Activated CD8-positive, alpha-beta T cell treated with anti-CD3 and anti-CD28 coated beads, Interleukin-2, amount 10 ng/mL, durations not matched to agents 7 days and 5 days (primary cell): ENCODE measurements at regions of chr4 and their contacts with region 1.

Region 1: GRCh38 chr4:77862478-77863216 is at the start of gene MRPL1:
- DNase-seq: peak; percentile 93
- ATAC-seq: peak; percentile 87
- H3K4me3 Mint-ChIP-seq: peak within 1 kb of the TSS; percentile 98
- H3K27ac Mint-ChIP-seq: peak within 1 kb of the TSS; percentile 99
- H3K4me1 Mint-ChIP-seq: peaks cover 63% of the 10 kb centered on the region
- H3K27me3 Mint-ChIP-seq: no peaks in the 10 kb centered on the region
- total RNA-seq, gene MRPL1: 45.6 to 47.2 TPM

Region 2: GRCh38 chr4:77293436-77293835 is 569.2 kb before region 1 on chr4:
- CTCF ChIA-PET with region 1: no interaction called
- POLR2A ChIA-PET with region 1: no interaction called
- DNase-seq: no peak
- ATAC-seq: no peak
- H3K4me3 Mint-ChIP-seq: no peak overlapping the region
- H3K27ac Mint-ChIP-seq: no peak overlapping the region
- H3K4me1 Mint-ChIP-seq: no peaks in the 10 kb centered on the region
- H3K27me3 Mint-ChIP-seq: peaks cover 6% of the 10 kb centered on the region

Region 3: GRCh38 chr4:77800483-77801259 is 62.0 kb before region 1 on chr4:
- CTCF ChIA-PET with region 1: interaction called, 13 read pairs
- POLR2A ChIA-PET with region 1: interaction called, 28 read pairs
- DNase-seq: no peak
- ATAC-seq: peak; percentile 59
- H3K4me3 Mint-ChIP-seq: peak overlapping the region; percentile 59
- H3K27ac Mint-ChIP-seq: peak overlapping the region; percentile 80
- H3K4me1 Mint-ChIP-seq: peaks cover 63% of the 10 kb centered on the region
- H3K27me3 Mint-ChIP-seq: no peaks in the 10 kb centered on the region

Region 4: DNA sequence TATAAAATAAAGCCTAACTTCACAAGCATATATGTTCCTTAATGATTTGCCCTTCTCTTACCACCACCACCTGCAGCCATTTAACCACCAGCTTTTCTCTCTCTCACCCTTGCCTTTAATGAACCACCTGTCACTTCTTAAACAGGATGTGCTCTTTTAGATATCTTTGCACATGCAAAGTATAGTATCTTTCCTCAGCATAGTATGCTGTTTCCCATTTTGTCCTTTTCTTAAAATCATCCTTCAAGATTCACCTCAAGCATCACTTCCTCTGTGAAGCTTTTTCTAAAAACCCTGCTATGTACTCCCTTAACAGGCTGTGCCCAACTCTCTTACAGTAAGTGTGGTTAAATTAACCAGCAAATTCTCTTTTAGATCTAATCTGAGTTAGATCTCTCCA is 35.3 kb before region 1 on chr4:
- CTCF ChIA-PET with region 1: interaction called, 12 read pairs
- POLR2A ChIA-PET with region 1: interaction called, 28 read pairs
- DNase-seq: no peak
- ATAC-seq: peak; percentile 56
- H3K4me3 Mint-ChIP-seq: no peak overlapping the region
- H3K27ac Mint-ChIP-seq: peak overlapping the region; percentile 74
- H3K4me1 Mint-ChIP-seq: peaks cover 27% of the 10 kb centered on the region
- H3K27me3 Mint-ChIP-seq: no peaks in the 10 kb centered on the region

Region 5: GRCh38 chr4:77903186-77903585 is 40.5 kb after region 1 on chr4:
- CTCF ChIA-PET with region 1: no interaction called
- POLR2A ChIA-PET with region 1: no interaction called
- DNase-seq: no peak
- ATAC-seq: no peak
- H3K4me3 Mint-ChIP-seq: no peak overlapping the region
- H3K27ac Mint-ChIP-seq: no peak overlapping the region
- H3K4me1 Mint-ChIP-seq: peaks cover 18% of the 10 kb centered on the region
- H3K27me3 Mint-ChIP-seq: no peaks in the 10 kb centered on the region

Region 6: DNA sequence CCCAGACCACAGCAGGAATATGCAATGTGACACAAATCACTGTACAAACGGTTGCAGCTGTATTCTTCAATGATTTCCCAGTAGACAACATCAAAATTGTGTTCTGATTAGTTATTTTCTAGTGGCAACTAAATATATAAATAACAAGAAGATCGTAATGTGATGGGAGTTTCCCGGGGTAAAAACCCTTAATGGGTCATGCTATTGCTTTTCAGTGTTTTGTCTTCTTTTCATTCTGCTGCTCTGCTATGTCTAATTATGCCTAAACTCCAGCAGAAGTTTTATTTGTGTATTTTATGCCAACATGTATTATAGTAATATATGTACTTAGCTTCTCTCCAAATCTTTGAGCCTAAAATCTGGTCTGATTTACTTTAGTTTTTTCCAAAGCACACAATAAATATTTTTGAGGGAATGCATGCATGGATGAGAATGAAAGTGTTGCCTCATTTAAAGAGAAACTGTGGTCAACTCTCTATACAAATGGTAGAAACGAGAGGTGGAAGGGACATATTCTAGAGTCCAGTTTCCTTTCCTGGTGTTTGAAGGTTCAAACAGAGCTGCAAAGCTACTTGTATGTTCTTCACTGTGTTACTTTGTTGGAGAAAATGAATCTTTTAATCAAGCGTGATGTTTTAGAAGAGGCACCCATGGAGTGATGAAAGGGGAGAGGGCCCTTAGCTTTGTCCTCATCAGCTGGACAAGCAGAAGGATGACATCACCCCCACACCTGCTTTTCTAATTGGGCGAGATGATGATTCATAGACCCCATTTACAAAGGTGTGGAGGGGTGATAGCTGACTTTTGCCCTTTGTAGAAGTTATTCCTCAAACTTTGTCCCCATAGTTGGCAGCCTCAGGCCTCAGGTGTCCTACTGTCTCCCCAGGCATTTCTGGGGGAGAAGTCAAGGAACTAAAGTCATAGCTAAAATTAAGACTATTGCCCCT is 324.2 kb after region 1 on chr4:
- CTCF ChIA-PET with region 1: no interaction called
- POLR2A ChIA-PET with region 1: no interaction called
- DNase-seq: no peak
- ATAC-seq: no peak
- H3K4me3 Mint-ChIP-seq: no peak overlapping the region
- H3K27ac Mint-ChIP-seq: no peak overlapping the region
- H3K4me1 Mint-ChIP-seq: no peaks in the 10 kb centered on the region
- H3K27me3 Mint-ChIP-seq: peaks cover 5% of the 10 kb centered on the region